ENCODE measurements at regions of chr3 and their contacts with region 1.

Region 1: DNA sequence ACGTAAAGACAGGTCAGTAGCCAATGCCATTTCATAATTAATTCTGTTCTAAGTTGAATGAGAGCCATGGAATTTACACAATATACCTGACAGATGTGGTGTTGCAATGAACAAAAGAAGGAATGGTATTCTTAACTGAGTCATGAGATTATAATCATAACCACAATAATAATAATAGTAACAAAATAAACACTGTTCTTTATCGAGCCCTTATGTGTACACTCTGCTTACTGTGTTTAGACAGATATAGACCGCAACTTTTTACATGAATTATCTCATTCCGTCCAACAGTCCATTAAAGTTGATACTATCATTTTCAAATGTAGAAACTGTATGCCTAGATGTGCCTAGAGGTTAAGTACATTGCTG is 28.2 kb upstream of the SCAANT1 start:
- DNase-seq: no peak
- H3K4me3 ChIP-seq: no peak overlapping the region
- H3K27ac ChIP-seq: no peak overlapping the region
- H3K27me3 ChIP-seq: no peaks in the 10 kb centered on the region
- CTCF ChIP-seq: no peak

Region 2: DNA sequence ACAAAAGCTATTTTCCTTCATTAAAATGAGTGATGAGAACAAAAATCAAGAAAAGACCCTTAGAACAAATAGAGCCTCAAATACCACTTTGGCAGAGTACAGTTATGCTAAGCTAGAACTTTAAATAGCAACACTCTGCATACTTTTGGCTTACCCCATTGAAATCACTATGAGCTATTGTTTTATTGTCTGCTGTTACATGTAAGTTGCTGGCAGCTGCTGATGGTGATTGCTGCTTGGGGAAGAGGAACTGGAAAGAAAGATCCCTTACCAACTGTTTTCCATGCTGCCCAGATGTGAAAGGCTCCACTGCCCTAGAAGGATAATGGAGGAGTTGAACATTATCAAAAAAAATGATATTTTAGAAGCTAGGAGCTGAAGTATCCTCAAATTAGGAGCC is 526.9 kb before region 1 on chr3:
- intact Hi-C with region 1: loop called in 1 of 2 experiments (anchors 5 kb)
- DNase-seq: no peak
- H3K4me3 ChIP-seq: no peak overlapping the region
- H3K27ac ChIP-seq: no peak overlapping the region
- H3K27me3 ChIP-seq: no peaks in the 10 kb centered on the region
- CTCF ChIP-seq: no peak

Region 3: GRCh38 chr3:63679186-63679585 is 261.2 kb before region 1 on chr3:
- intact Hi-C with region 1: no loop called
- DNase-seq: no peak
- H3K4me3 ChIP-seq: no peak overlapping the region
- H3K27ac ChIP-seq: no peak overlapping the region
- H3K27me3 ChIP-seq: no peaks in the 10 kb centered on the region
- CTCF ChIP-seq: no peak

Region 4: GRCh38 chr3:63774771-63775170 is 165.6 kb before region 1 on chr3:
- intact Hi-C with region 1: no loop called
- DNase-seq: no peak
- H3K4me3 ChIP-seq: no peak overlapping the region
- H3K27ac ChIP-seq: no peak overlapping the region
- H3K27me3 ChIP-seq: no peaks in the 10 kb centered on the region
- CTCF ChIP-seq: no peak